ENCODE measurements at regions of chrX and their contacts with region 1.

Region 1: GRCh38 chrX:111719426-111720210 is 38.6 kb downstream of the ALG13 start:
- DNase-seq: peak; percentile 1
- H3K4me3 ChIP-seq: no peak overlapping the region
- H3K27ac ChIP-seq: no peak overlapping the region
- H3K4me1 ChIP-seq: no peaks in the 10 kb centered on the region
- H3K27me3 ChIP-seq: no peaks in the 10 kb centered on the region
- CTCF ChIP-seq: no peak
- POLR2A ChIP-seq: no peak

Region 2: GRCh38 chrX:111600341-111600740 is 119.3 kb before region 1 on chrX:
- CTCF ChIA-PET with region 1: no interaction called
- POLR2A ChIA-PET with region 1: no interaction called
- dilution Hi-C with region 1: no loop called
- intact Hi-C with region 1: no loop called
- DNase-seq: no peak
- H3K4me3 ChIP-seq: no peak overlapping the region
- H3K27ac ChIP-seq: no peak overlapping the region
- H3K4me1 ChIP-seq: no peaks in the 10 kb centered on the region
- H3K27me3 ChIP-seq: no peaks in the 10 kb centered on the region
- CTCF ChIP-seq: no peak
- POLR2A ChIP-seq: no peak

Region 3: DNA sequence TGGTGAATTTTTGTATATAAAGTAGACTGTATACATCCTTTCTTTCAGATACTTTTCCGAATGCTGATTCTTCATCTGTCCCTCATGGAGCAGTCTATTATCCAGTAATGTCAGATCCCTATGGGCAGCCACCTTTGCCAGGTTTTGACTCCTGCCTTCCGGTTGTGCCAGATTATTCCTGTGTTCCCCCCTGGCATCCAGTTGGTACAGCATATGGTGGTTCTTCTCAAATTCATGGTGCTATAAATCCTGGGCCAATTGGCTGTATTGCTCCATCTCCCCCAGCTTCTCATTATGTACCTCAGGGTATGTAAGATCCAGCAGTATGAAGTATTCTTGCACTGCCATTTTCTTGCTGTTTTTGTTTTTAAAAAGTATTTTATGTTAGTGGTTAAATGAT is 40.1 kb after region 1 on chrX:
- CTCF ChIA-PET with region 1: no interaction called
- POLR2A ChIA-PET with region 1: no interaction called
- dilution Hi-C with region 1: no loop called
- intact Hi-C with region 1: no loop called
- DNase-seq: no peak
- H3K4me3 ChIP-seq: no peak overlapping the region
- H3K27ac ChIP-seq: no peak overlapping the region
- H3K4me1 ChIP-seq: no peaks in the 10 kb centered on the region
- H3K27me3 ChIP-seq: no peaks in the 10 kb centered on the region
- CTCF ChIP-seq: no peak
- POLR2A ChIP-seq: no peak

Region 4: DNA sequence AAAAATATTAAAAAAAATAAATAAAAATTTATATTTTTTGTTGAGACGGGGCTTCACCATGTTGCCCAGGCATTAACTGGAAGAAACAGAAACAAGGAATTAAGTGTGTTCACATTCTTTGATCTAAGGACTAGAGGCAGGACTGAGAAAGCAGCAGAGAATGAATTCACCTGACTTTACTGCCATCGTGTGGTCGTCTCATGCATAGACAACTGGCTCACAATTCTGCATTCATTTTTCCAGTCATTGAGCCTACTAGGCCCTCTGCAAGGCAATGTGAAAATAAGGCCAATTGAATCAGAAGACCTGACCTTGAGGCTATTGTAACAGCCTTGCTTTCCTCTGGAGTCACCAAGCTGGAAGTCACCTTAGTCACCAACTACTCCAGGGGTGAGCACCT is 922.7 kb after region 1 on chrX:
- CTCF ChIA-PET with region 1: interaction called, 3 read pairs
- POLR2A ChIA-PET with region 1: no interaction called
- dilution Hi-C with region 1: no loop called
- intact Hi-C with region 1: loop called (anchors 5 kb)
- DNase-seq: peak; percentile 11
- H3K4me3 ChIP-seq: no peak overlapping the region
- H3K27ac ChIP-seq: no peak overlapping the region
- H3K4me1 ChIP-seq: no peaks in the 10 kb centered on the region
- H3K27me3 ChIP-seq: no peaks in the 10 kb centered on the region
- CTCF ChIP-seq: peak; percentile 30 to 56
- POLR2A ChIP-seq: no peak